ENCODE measurements at regions of chr14 and their contacts with region 1.

Region 1: DNA sequence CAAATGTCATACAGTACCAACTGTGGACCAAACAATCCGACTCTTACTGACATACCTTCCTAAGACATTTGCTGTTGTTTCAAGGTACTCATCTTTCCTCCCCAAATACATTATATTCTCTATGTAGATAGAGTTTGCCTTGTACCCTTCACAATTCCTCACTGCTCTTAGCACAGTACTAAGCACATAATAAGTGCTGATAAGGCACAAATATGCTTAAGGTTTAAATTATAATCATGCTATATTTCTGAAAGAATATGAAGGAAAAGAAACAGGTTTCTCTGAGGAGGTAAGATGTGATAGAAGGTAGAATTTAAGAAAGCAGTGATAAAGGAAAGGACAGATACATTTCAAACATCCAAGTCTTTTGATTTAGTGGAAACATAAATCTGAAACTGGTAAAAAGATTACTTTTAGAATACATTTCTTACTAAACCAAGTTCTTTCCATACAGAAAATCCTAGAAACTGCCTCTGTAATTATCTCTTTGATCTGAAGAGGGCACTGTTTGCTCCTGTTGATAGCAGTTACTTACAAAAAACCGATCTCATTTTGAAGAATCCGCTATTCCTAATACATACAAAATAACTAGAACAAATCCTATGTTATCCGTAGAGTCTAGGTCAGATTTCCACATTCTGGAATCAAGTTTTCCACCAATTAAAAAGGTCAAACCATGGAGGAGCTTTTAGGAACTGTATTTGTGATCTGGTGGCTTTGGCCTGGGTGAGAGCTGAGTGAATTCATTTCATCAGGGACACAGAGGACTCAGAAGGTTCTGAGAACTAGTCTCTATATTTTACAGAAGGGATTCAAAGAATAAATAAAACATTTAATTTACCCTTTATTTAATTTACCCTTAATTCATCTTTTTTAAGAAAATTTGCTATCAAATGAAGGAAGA is 311.9 kb downstream of the DAD1 start:
- DNase-seq: no peak
- H3K4me3 ChIP-seq: no peak overlapping the region
- H3K27ac ChIP-seq: no peak overlapping the region
- H3K4me1 ChIP-seq: no peaks in the 10 kb centered on the region
- H3K27me3 ChIP-seq: no peaks in the 10 kb centered on the region
- CTCF ChIP-seq: peak in 3 of 4 experiments; percentile 11 to 46 (median 41)
- POLR2A ChIP-seq: no peak

Region 2: DNA sequence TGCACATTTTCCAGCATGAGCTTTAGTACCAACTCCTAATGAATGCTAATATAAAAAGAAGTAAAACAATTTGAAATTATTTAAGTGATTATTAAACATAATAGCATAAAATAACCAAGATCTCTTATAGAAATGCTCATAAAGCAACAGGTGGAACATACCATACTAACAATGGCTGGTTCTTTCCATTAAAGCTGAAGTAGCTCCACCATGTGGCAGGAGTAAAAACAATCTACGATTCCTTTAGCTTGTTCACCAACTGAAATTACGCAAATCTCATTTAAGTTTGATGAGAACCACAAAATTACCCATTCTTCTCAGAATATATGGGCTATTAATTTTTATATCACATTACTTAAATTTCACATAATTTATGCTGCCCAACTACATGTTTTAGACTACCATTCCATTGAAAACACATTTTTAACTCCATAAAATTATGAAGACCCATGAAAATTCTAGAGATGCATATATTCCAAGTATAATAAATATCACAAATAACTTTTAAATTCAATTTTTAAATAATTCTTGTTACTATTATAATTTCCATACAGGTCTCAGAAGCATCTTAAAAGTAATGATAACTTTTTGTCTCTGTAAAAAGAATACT is 98.3 kb after region 1 on chr14:
- intact Hi-C with region 1: loop called (anchors 10 kb)
- DNase-seq: no peak
- H3K4me3 ChIP-seq: no peak overlapping the region
- H3K27ac ChIP-seq: no peak overlapping the region
- H3K4me1 ChIP-seq: no peaks in the 10 kb centered on the region
- H3K27me3 ChIP-seq: no peaks in the 10 kb centered on the region
- CTCF ChIP-seq: peak; percentile 11 to 66 (median 58)
- POLR2A ChIP-seq: no peak

Measured in prostate gland (tissue), 2 donors.